ENCODE measurements at regions of chr12 and their contacts with region 1.

Region 1: GRCh38 chr12:57888409-57889157 is 42.1 kb upstream of the CTDSP2 start:
- DNase-seq: peak; percentile 82
- ATAC-seq: peak; percentile 90
- H3K4me3 ChIP-seq: peak overlapping the region; percentile 56
- H3K27ac ChIP-seq: peak overlapping the region; percentile 74
- H3K4me1 ChIP-seq: peaks cover 38% of the 10 kb centered on the region
- H3K27me3 ChIP-seq: no peaks in the 10 kb centered on the region
- CTCF ChIP-seq: no peak

Region 2: DNA sequence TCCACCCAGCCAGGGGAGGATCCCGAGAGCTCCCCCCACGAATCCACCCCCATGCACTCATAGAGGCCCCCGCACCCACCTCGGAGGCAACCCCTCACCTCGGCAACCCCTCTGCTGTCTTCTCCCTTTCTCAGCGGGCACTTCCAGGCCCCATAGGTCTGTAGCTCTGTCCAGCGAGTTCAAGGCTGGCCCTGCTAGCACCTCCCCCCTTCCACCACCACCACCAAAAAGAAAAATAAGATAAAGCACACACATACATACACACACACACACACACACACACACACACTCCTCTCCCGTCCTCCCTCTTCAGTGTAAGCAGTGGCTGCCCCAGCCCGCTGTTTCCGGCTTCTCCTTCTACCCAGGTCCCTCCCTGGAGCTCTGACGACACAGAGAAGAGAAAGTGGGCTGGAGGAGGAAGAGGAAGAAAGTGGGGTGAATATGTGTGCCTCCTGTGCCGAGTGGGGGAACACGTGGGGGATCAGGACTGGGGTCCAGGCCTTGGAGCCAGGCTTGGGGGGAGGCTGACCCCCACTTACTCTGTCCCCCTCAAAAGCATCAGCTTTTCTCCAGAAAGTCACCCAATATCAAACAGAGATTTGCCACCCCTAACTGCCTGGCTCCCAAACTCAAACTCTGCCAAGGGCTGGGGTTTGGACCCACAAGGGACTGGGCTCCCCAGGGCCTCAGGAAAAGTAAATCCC is 777.4 kb before region 1 on chr12 and contains the start of gene STAT6:
- CTCF ChIA-PET with region 1: no interaction called
- POLR2A ChIA-PET with region 1: no interaction called
- intact Hi-C with region 1: no loop called
- DNase-seq: peak; percentile 59
- ATAC-seq: peak; percentile 53
- H3K4me3 ChIP-seq: peak within 1 kb of the TSS; percentile 69
- H3K27ac ChIP-seq: peak within 1 kb of the TSS; percentile 82
- H3K4me1 ChIP-seq: peaks cover 32% of the 10 kb centered on the region
- H3K27me3 ChIP-seq: no peaks in the 10 kb centered on the region
- CTCF ChIP-seq: no peak
- total RNA-seq, gene STAT6: 20.8 and 28.4 TPM in 2 replicates

Region 3: GRCh38 chr12:57687862-57688261 is 200.7 kb before region 1 on chr12:
- CTCF ChIA-PET with region 1: no interaction called
- POLR2A ChIA-PET with region 1: interaction called, 10 read pairs
- intact Hi-C with region 1: no loop called
- DNase-seq: no peak
- ATAC-seq: no peak
- H3K4me3 ChIP-seq: no peak overlapping the region
- H3K27ac ChIP-seq: no peak overlapping the region
- H3K4me1 ChIP-seq: 0 out of 2 replicates have a peak, but pooled peaks cover under 1% of the 10 kb centered on the region
- H3K27me3 ChIP-seq: peaks cover 23% of the 10 kb centered on the region; the same call in 1 of the 2 replicates
- CTCF ChIP-seq: no peak

Region 4: GRCh38 chr12:58169826-58170225 is 281.2 kb after region 1 on chr12:
- CTCF ChIA-PET with region 1: no interaction called
- POLR2A ChIA-PET with region 1: no interaction called
- intact Hi-C with region 1: no loop called
- DNase-seq: no peak
- ATAC-seq: no peak
- H3K4me3 ChIP-seq: no peak overlapping the region
- H3K27ac ChIP-seq: no peak overlapping the region
- H3K4me1 ChIP-seq: no peaks in the 10 kb centered on the region
- H3K27me3 ChIP-seq: no peaks in the 10 kb centered on the region
- CTCF ChIP-seq: no peak

Measured in PC-3 (cell line).